AG04450 (cell line): ENCODE measurements at regions of chr7 and their contacts with region 1.

Region 1: GRCh38 chr7:26584326-26584725 is 280.1 kb downstream of the SKAP2 start:
- DNase-seq: no peak
- H3K4me3 ChIP-seq: no peak overlapping the region
- H3K27ac ChIP-seq: no peak overlapping the region
- H3K27me3 ChIP-seq: peaks cover 3% of the 10 kb centered on the region
- CTCF ChIP-seq: no peak

Region 2: GRCh38 chr7:26813432-26813831 is 229.1 kb after region 1 on chr7:
- CTCF ChIA-PET with region 1: no interaction called
- POLR2A ChIA-PET with region 1: no interaction called
- DNase-seq: peak; percentile 39
- H3K4me3 ChIP-seq: no peak overlapping the region
- H3K27ac ChIP-seq: no peak overlapping the region
- H3K27me3 ChIP-seq: no peaks in the 10 kb centered on the region
- CTCF ChIP-seq: no peak

Region 3: GRCh38 chr7:27188386-27189294 is 604.3 kb after region 1 on chr7:
- CTCF ChIA-PET with region 1: no interaction called
- POLR2A ChIA-PET with region 1: interaction called, 11 read pairs
- DNase-seq: no peak
- H3K4me3 ChIP-seq: no peak overlapping the region
- H3K27ac ChIP-seq: no peak overlapping the region
- H3K27me3 ChIP-seq: peaks cover 96% of the 10 kb centered on the region
- CTCF ChIP-seq: no peak